ENCODE measurements at regions of chr18 and their contacts with region 1.

Region 1: DNA sequence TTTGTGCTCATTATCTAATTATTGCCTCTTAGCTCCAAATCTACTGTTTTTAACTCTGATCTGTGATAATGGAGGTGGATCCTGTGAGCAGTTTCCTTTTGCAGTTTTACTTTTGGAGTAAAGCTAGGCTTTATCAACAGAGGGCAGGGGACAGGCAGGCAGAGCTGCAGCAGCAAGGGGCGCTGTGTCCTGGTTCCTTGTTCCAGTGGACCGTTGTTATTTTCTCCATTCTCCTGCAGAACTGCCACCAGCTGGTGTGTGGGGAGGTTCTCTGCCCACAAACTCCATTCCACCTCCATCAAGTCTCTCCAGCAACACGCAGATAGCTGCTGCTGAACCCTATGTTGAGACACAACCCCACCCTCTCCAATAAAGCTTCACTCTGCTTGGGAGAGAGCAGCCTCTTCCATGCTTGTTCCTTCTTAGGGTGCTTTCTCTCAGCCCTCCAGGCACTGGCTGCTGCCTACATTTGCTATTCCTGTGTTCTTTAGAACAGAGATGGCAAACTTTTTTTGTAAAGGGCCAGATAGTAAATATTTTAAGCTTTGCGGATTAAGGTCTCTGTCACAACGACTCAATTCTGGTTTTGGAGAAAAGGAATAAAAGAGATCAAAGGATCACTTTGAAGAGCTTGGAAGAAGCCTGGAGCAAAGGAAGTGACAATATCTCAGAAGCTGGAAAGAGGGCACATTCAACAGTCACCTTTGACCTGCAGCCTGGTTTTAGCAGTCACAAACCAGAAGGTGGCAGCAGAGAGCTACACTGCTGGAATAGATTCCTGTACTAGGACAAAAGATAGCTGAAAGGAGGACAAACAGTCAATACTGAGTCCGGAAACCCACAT is 208.8 kb downstream of the CCDC178 start:
- DNase-seq: peak; percentile 61
- H3K4me3 Mint-ChIP-seq: no peak overlapping the region
- H3K27ac Mint-ChIP-seq: no peak overlapping the region
- H3K4me1 Mint-ChIP-seq: no peaks in the 10 kb centered on the region
- H3K27me3 Mint-ChIP-seq: no peaks in the 10 kb centered on the region

Region 2: DNA sequence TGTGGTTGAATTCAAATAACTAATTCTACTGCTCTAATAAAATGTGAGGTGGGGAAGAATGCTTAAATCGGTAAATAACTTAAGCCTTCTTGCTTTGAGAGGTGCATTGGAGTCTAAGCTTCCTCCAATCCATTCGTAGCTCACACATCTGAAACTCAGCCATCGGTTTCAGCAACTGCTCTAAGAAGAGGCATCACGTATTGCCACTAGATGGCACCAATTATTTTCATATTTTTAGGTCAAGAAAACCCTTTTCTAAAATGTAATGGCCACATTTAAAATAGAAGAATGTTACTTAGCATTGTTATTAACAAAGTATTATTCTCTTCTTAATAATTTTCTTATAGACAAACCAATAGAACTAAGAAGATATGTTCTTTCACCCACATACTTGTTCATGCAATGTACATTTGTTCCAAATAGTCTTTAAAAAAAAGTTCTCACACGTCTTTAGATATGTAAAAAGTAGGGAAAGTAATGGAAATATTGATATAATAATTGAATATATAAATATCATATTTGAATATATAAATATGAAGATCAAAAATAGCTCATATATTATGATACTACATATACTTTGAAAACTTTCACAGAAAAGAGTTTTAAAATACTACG is 21.0 kb before region 1 on chr18:
- CTCF ChIA-PET with region 1: no interaction called
- POLR2A ChIA-PET with region 1: no interaction called
- intact Hi-C with region 1: no loop called
- DNase-seq: no peak
- H3K4me3 Mint-ChIP-seq: no peak overlapping the region
- H3K27ac Mint-ChIP-seq: no peak overlapping the region
- H3K4me1 Mint-ChIP-seq: no peaks in the 10 kb centered on the region
- H3K27me3 Mint-ChIP-seq: no peaks in the 10 kb centered on the region

Region 3: GRCh38 chr18:33421225-33421624 is 189.5 kb after region 1 on chr18:
- CTCF ChIA-PET with region 1: no interaction called
- POLR2A ChIA-PET with region 1: no interaction called
- intact Hi-C with region 1: no loop called
- DNase-seq: no peak
- H3K4me3 Mint-ChIP-seq: no peak overlapping the region
- H3K27ac Mint-ChIP-seq: no peak overlapping the region
- H3K4me1 Mint-ChIP-seq: no peaks in the 10 kb centered on the region
- H3K27me3 Mint-ChIP-seq: no peaks in the 10 kb centered on the region

Region 4: DNA sequence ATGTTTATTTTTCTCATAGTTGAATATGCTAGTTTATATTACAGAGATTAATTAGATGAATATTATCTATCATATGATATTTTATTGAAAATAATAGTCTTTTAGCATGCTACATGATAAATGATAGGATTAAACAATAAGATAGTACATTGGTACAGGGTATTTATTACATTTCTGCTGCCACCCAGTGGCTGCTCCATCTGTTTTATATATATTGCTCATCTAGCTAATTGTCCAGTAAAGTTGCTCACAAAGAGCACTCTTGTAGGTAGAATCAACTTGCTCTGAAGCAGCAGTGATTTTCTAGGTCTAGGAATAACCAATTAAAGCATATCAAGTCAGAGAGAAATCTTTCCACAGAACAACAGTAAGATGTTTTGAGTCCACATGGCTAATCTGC is 529.7 kb after region 1 on chr18:
- CTCF ChIA-PET with region 1: interaction called, 5 read pairs
- POLR2A ChIA-PET with region 1: no interaction called
- intact Hi-C with region 1: loop called (anchors 2 kb)
- DNase-seq: no peak
- H3K4me3 Mint-ChIP-seq: no peak overlapping the region
- H3K27ac Mint-ChIP-seq: no peak overlapping the region
- H3K4me1 Mint-ChIP-seq: no peaks in the 10 kb centered on the region
- H3K27me3 Mint-ChIP-seq: no peaks in the 10 kb centered on the region

Region 5: DNA sequence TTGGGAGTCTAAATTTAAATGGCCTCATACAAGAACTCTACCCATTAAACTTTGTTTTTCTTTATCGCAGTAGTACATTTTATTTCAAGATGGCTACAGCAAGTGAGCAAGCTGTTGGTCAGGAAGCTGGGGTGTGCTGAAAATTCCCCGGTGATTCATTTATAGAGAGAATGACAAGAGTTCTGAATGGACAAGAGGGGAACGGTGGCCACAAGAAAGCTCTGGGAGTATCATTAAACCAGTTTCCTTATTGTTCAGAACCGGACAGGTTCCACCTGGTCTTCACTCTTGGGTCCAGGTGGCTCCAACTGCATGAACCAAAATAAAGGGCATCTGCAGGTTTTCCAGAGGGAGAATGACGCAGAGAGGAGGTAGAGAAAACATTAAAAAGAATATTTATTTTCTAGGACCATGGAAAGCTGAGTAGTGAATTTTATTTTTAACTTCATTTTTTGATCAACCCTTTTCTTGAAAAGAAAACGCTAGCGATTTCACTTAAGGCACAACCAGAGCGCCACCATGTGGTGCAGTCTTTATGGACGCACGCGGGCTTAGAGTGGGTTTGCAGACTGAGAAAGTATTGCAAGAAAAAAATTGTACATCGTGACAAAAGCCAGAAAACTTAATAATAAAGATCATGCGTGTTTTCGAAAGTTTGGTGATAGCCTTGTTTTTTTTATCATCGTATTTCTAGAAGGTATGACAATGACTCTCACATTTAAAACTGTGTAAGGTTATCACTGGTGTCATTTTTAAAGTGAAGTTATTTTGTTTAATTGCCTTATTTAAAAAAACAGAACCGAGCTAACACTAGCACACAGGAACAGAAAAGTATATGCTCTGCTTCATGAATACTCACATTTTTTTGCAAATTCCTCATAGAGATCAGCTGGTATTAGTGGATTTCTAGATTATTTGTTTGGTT is 1090.9 kb after region 1 on chr18:
- CTCF ChIA-PET with region 1: no interaction called
- POLR2A ChIA-PET with region 1: no interaction called
- intact Hi-C with region 1: loop called (anchors 5 kb)
- DNase-seq: peak; percentile 15
- H3K4me3 Mint-ChIP-seq: no peak overlapping the region
- H3K27ac Mint-ChIP-seq: no peak overlapping the region
- H3K4me1 Mint-ChIP-seq: no peaks in the 10 kb centered on the region
- H3K27me3 Mint-ChIP-seq: no peaks in the 10 kb centered on the region

Measured in activated CD4-positive, alpha-beta memory T cell treated with anti-CD3 and anti-CD28 coated beads for 36 hours (primary cell).